ENCODE measurements at regions of chr22 and their contacts with region 1.

Region 1: GRCh38 chr22:25540166-25540907 is 24.1 kb upstream of the GRK3 start:
- DNase-seq: no peak
- ATAC-seq: no peak
- H3K4me3 Mint-ChIP-seq: no peak overlapping the region
- H3K27ac Mint-ChIP-seq: no peak overlapping the region
- H3K4me1 Mint-ChIP-seq: peaks cover 15% of the 10 kb centered on the region
- H3K27me3 Mint-ChIP-seq: no peaks in the 10 kb centered on the region

Region 2: GRCh38 chr22:25465949-25466348 is 74.4 kb before region 1 on chr22:
- CTCF ChIA-PET with region 1: interaction called, 16 read pairs
- POLR2A ChIA-PET with region 1: no interaction called
- DNase-seq: no peak
- ATAC-seq: no peak
- H3K4me3 Mint-ChIP-seq: no peak overlapping the region
- H3K27ac Mint-ChIP-seq: peak overlapping the region; percentile 15
- H3K4me1 Mint-ChIP-seq: peaks cover 13% of the 10 kb centered on the region
- H3K27me3 Mint-ChIP-seq: no peaks in the 10 kb centered on the region

Region 3: GRCh38 chr22:25554238-25554671 is 13.9 kb after region 1 on chr22:
- CTCF ChIA-PET with region 1: interaction called, 21 read pairs
- POLR2A ChIA-PET with region 1: interaction called, 3 read pairs
- DNase-seq: no peak
- ATAC-seq: no peak
- H3K4me3 Mint-ChIP-seq: no peak overlapping the region
- H3K27ac Mint-ChIP-seq: no peak overlapping the region
- H3K4me1 Mint-ChIP-seq: peaks cover 7% of the 10 kb centered on the region
- H3K27me3 Mint-ChIP-seq: no peaks in the 10 kb centered on the region

Region 4: GRCh38 chr22:25702040-25702439 is 161.7 kb after region 1 on chr22:
- CTCF ChIA-PET with region 1: interaction called, 42 read pairs
- POLR2A ChIA-PET with region 1: interaction called, 3 read pairs
- DNase-seq: no peak
- ATAC-seq: no peak
- H3K4me3 Mint-ChIP-seq: peak overlapping the region; percentile 9
- H3K27ac Mint-ChIP-seq: peak overlapping the region; percentile 70
- H3K4me1 Mint-ChIP-seq: peaks cover 51% of the 10 kb centered on the region
- H3K27me3 Mint-ChIP-seq: no peaks in the 10 kb centered on the region

Measured in activated CD8-positive, alpha-beta T cell treated with anti-CD3 and anti-CD28 coated beads, Interleukin-2, amount 10 ng/mL, durations not matched to agents 7 days and 5 days (primary cell).